K562 (cell line): ENCODE measurements at regions of chr6 and their contacts with region 1.

Region 1: GRCh38 chr6:143164565-143165105 is 103.9 kb downstream of the AIG1 start:
- DNase-seq: peak in 3 of 4 experiments; percentile 20 to 95 (median 87)
- ATAC-seq: peak; percentile 83
- H3K4me3 ChIP-seq: peak overlapping the region; percentile 51
- H3K27ac ChIP-seq: peak overlapping the region; percentile 84
- H3K4me1 ChIP-seq: peaks cover 12 to 19% of the 10 kb centered on the region in 2 experiments
- H3K27me3 ChIP-seq: no peaks in the 10 kb centered on the region
- CTCF ChIP-seq: no peak
- EP300 ChIP-seq: peak; percentile 95
- POLR2A ChIP-seq: peak; percentile 81
- RAD21 ChIP-seq: peak in 1 of 2 experiments; percentile 36; a peak in 2 of 4 replicates

Region 2: DNA sequence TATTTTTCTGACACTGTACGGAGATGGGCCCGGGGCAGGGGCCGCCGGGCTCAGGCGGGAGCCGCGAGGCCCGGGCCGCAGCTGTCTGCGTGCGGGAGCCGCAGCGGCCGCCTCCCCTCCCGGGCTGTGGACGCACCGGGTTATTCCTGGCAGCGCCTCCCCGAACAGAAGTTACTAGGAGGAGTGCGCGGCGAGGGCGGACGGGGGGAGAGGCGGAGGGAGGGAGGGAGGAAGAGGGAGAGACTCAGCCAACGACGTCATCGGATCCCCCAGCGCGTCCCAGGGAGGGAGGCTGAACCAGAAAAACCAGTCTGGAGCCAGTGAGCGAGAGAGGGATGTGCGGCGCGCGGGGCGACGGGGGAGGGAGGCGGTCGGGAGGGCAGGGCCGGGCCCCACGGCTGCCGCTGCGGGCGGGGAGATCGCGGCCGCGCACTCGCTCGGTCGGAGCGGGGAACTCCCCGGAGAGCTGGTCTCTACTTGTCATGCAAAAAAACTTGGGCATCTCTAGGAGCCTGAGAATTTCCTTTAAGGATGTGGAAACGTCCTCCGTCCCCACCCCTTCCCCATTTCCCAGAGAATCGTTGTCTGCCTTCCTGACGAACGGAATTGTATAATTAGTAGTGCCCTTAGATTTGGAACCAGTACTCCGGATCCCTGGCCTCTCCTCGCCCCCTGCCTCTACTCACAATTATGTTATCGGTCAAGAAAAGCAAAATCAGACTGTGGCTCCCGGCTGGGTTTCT is 218.3 kb before region 1 on chr6:
- CTCF ChIA-PET with region 1: no interaction called
- POLR2A ChIA-PET with region 1: no interaction called
- in situ Hi-C with region 1: no loop called
- intact Hi-C with region 1: loop called (anchors 10 kb)
- DNase-seq: peak; percentile 70 to 83 (median 76)
- ATAC-seq: peak; percentile 70
- H3K4me3 ChIP-seq: peak overlapping the region; percentile 51
- H3K27ac ChIP-seq: no peak overlapping the region
- H3K4me1 ChIP-seq: peaks cover 8 to 36% of the 10 kb centered on the region in 2 experiments; a peak in 3 of 5 replicates
- H3K27me3 ChIP-seq: peaks cover 25 to 41% of the 10 kb centered on the region in 2 experiments
- CTCF ChIP-seq: no peak
- EP300 ChIP-seq: no peak
- POLR2A ChIP-seq: no peak
- RAD21 ChIP-seq: no peak

Region 3: DNA sequence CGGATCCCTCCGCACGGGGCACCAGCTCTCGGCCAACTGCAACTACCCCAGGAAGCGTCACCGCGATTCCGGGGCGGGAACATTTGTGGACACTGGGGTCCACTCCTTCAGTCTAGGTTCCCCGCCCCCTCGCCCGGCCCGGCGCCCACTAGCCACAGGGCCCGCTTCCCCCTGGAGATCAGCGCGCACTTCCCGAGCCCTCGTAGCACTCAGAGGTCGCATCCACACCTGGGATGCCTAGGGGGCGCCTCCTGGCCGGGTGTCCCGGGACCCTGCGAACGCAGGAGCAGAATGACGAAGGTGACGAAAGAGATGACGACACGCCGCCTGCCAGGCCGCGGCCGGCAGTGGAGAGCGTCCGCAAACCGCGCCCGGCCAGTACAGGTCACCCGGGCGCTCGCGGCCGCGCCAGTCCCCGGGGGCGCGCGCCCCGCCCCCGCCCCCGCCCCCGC is 104.3 kb before region 1 on chr6:
- CTCF ChIA-PET with region 1: no interaction called
- POLR2A ChIA-PET with region 1: interaction called, 4 read pairs
- in situ Hi-C with region 1: no loop called
- intact Hi-C with region 1: loop called (anchors 1 kb)
- DNase-seq: peak in 3 of 4 experiments; percentile 84 to 95 (median 95)
- ATAC-seq: peak; percentile 88
- H3K4me3 ChIP-seq: peak overlapping the region; percentile 59
- H3K27ac ChIP-seq: peak overlapping the region; percentile 92
- H3K4me1 ChIP-seq: peaks cover 9 to 37% of the 10 kb centered on the region in 2 experiments; a peak in 4 of 5 replicates
- H3K27me3 ChIP-seq: no peaks in the 10 kb centered on the region
- CTCF ChIP-seq: peak; percentile 16 to 48 (median 31); a peak in 4 of 6 replicates
- EP300 ChIP-seq: no peak
- POLR2A ChIP-seq: peak; percentile 78
- RAD21 ChIP-seq: peak; percentile 42 to 61

Region 4: GRCh38 chr6:143200167-143200770 is 35.6 kb after region 1 on chr6:
- CTCF ChIA-PET with region 1: no interaction called
- POLR2A ChIA-PET with region 1: interaction called, 4 read pairs
- in situ Hi-C with region 1: no loop called
- intact Hi-C with region 1: loop called (anchors 1 kb)
- DNase-seq: peak in 3 of 4 experiments; percentile 30 to 78 (median 56)
- ATAC-seq: peak; percentile 56
- H3K4me3 ChIP-seq: no peak overlapping the region
- H3K27ac ChIP-seq: peak overlapping the region; percentile 73; the same call in 2 of the 3 replicates
- H3K4me1 ChIP-seq: peaks cover 4 to 62% of the 10 kb centered on the region in 2 experiments
- H3K27me3 ChIP-seq: no peaks in the 10 kb centered on the region
- CTCF ChIP-seq: no peak
- EP300 ChIP-seq: peak; percentile 57; the same call in 1 of the 2 replicates
- POLR2A ChIP-seq: peak; percentile 14; the same call in 1 of the 2 replicates
- RAD21 ChIP-seq: peak in 1 of 2 experiments; percentile 23; a peak in 1 of 4 replicates

Region 5: GRCh38 chr6:143271024-143271423 is 106.4 kb after region 1 on chr6:
- CTCF ChIA-PET with region 1: no interaction called
- POLR2A ChIA-PET with region 1: no interaction called
- in situ Hi-C with region 1: no loop called
- intact Hi-C with region 1: no loop called
- DNase-seq: no peak
- ATAC-seq: no peak
- H3K4me3 ChIP-seq: no peak overlapping the region
- H3K27ac ChIP-seq: no peak overlapping the region
- H3K4me1 ChIP-seq: no peaks in the 10 kb centered on the region
- H3K27me3 ChIP-seq: no peaks in the 10 kb centered on the region
- CTCF ChIP-seq: no peak
- EP300 ChIP-seq: no peak
- POLR2A ChIP-seq: no peak
- RAD21 ChIP-seq: no peak